ENCODE measurements at regions of chrX and their contacts with region 1.

Region 1: DNA sequence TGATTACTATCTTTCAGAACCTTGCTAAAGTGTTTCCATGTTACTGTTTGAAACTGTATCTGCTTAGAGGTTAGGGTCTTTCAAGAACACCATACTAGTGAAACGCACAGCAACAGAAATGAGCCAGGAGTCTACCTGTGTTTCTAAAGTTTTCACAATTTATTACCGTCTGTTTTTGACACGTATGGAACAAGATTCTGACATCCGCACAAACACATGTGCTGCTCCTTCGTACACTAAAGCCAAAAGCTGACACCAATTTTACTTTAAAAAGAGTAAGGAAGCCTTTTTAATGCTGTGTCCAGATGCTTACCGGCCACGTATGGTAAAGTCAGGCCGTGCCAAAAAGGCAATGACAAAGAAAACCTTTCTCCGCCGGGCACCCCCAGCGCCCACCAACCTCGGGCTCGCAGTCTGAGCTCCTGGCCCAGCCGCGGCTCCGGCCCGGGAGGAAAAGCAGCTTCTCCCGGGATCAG is 532 bp downstream of the RPS4X start:
- DNase-seq: no peak

Region 2: GRCh38 chrX:72181178-72182125 is 95.1 kb before region 1 on chrX and contains the start of gene PIN4:
- CTCF ChIA-PET with region 1: no interaction called
- POLR2A ChIA-PET with region 1: interaction called, 11 read pairs
- DNase-seq: peak; percentile 96

Region 3: GRCh38 chrX:72245461-72246089 is 30.9 kb before region 1 on chrX:
- CTCF ChIA-PET with region 1: interaction called, 7 read pairs
- POLR2A ChIA-PET with region 1: interaction called, 37 read pairs
- DNase-seq: peak; percentile 89

Region 4: GRCh38 chrX:72262077-72262476 is 14.4 kb before region 1 on chrX:
- CTCF ChIA-PET with region 1: interaction called, 14 read pairs
- POLR2A ChIA-PET with region 1: interaction called, 67 read pairs
- DNase-seq: no peak

Region 5: GRCh38 chrX:72306851-72307645 is 30.5 kb after region 1 on chrX:
- CTCF ChIA-PET with region 1: interaction called, 5 read pairs
- POLR2A ChIA-PET with region 1: interaction called, 33 read pairs
- DNase-seq: peak; percentile 80